MCF 10A (cell line): ENCODE measurements at regions of chr10 and their contacts with region 1.

Region 1: DNA sequence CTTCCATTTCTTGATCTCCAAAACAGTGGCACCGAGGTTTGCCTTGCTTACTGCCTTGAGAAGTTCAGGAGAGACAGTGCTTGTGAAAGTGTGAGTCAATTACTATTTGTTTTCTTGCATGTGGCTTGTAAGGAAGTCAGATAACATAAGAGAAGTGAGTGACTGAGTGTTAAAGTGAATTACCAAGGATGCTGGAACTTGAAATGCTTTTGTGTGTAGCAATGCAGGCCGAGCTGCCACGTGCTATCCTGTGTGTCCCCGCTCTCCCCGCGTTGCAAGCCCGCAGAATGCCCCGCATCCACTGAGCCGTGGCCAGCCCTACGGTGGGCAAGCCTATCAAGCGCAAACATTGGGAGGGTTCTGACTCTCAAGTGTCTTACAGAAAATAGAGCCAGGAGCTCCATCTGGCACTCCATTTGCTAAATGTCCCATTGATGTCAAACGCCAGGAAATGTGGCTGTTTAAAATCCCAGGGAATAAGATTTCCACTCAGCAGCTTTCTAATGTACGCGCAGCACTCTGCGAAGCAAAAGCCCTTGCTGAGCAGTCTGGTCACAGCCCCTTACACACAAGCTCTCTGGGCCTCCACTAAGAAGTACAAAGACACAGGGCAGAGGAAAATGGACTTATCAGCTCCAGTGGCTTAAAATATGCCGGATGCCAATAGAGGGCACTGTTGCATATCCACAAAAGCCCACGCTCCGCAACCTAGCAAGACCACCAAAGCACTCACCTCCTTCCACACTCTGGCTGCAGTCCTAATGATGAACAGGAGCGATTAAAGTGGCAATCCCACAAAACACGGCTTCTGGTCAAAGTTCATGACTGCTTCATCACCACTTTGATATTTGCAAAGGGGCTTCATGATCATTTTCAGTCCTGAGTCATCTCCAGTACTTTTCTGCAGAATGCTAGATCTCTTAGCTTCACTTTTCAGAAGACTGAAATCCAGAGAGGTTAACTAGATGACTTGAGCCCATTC is 158.0 kb upstream of the ITGB1 start:
- DNase-seq: peak; percentile 39
- H3K4me3 Mint-ChIP-seq: no peak overlapping the region
- H3K27ac Mint-ChIP-seq: no peak overlapping the region
- H3K4me1 Mint-ChIP-seq: peaks cover 24% of the 10 kb centered on the region
- H3K27me3 Mint-ChIP-seq: no peaks in the 10 kb centered on the region
- CTCF ChIP-seq: peak; percentile 39

Region 2: GRCh38 chr10:33102071-33102470 is 14.0 kb before region 1 on chr10:
- CTCF ChIA-PET with region 1: interaction called, 4 read pairs
- POLR2A ChIA-PET with region 1: interaction called, 19 read pairs
- intact Hi-C with region 1: no loop called
- DNase-seq: no peak
- H3K4me3 Mint-ChIP-seq: no peak overlapping the region
- H3K27ac Mint-ChIP-seq: no peak overlapping the region
- H3K4me1 Mint-ChIP-seq: peaks cover 21% of the 10 kb centered on the region
- H3K27me3 Mint-ChIP-seq: no peaks in the 10 kb centered on the region
- CTCF ChIP-seq: no peak

Region 3: GRCh38 chr10:33180390-33180789 is 64.4 kb after region 1 on chr10:
- CTCF ChIA-PET with region 1: no interaction called
- POLR2A ChIA-PET with region 1: no interaction called
- intact Hi-C with region 1: no loop called
- DNase-seq: no peak
- H3K4me3 Mint-ChIP-seq: no peak overlapping the region
- H3K27ac Mint-ChIP-seq: no peak overlapping the region
- H3K4me1 Mint-ChIP-seq: no peaks in the 10 kb centered on the region
- H3K27me3 Mint-ChIP-seq: no peaks in the 10 kb centered on the region
- CTCF ChIP-seq: no peak